Aorta (tissue), 5 donors: ENCODE measurements at regions of chr2 and their contacts with region 1.

Region 1: GRCh38 chr2:163735685-163736432 is at the start of gene FIGN:
- DNase-seq: peak; percentile 83 to 93
- ATAC-seq: peak; percentile 89
- H3K4me3 ChIP-seq: peak within 1 kb of the TSS; percentile 96 to 100
- H3K27ac ChIP-seq: peak within 1 kb of the TSS; percentile 74 to 92
- H3K4me1 ChIP-seq: no peaks in the 10 kb centered on the region
- H3K27me3 ChIP-seq: no peaks in the 10 kb centered on the region
- total RNA-seq, gene FIGN: 12.7 to 27.8 TPM

Region 2: DNA sequence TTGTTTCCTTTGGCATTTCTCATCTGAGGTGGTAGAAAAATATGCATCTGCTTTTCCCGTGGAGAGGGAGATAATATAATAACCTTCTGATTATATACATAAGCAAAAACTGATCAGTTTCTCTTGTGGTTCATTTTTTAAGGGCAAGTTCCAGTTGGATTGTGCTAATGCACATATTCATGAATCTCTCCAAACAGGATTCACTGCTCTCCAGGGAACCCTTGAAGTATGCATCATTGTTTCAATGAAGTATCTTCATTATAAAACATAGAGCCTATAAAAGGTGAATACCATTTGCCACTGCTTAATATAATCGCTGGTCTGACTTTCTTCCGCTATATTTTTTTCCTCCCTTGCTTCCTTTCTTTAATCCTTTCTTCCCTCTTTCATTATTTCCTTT is 384.7 kb before region 1 on chr2:
- intact Hi-C with region 1: loop called (anchors 5 to 10 kb)
- DNase-seq: no peak
- ATAC-seq: no peak
- H3K4me3 ChIP-seq: no peak overlapping the region
- H3K27ac ChIP-seq: no peak overlapping the region
- H3K4me1 ChIP-seq: peaks cover 2 to 4% of the 10 kb centered on the region in 2 donors
- H3K27me3 ChIP-seq: no peaks in the 10 kb centered on the region

Region 3: DNA sequence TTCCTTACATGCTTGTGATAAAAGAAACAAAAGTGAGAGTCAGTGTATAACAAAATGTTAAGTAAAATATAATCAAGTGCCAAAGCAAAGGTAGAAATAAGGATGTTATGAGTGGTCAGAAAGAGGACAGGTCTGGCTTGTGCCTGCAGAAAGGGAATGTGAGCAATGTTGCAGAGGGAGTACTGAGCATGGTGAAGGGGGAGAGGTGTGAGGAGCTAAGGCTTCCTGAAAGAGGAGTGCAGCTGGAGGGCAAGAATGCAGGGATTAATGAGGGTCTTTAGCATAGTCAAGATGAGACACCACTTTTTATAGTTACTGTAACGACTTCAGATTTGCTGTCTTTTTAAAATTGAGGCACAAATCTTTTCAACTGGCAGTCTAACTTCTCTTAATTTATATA is 21.9 kb after region 1 on chr2:
- intact Hi-C with region 1: no loop called
- DNase-seq: no peak
- ATAC-seq: no peak
- H3K4me3 ChIP-seq: no peak overlapping the region
- H3K27ac ChIP-seq: no peak overlapping the region
- H3K4me1 ChIP-seq: peaks cover 0 to 2% of the 10 kb centered on the region in 2 donors
- H3K27me3 ChIP-seq: no peaks in the 10 kb centered on the region

Region 4: DNA sequence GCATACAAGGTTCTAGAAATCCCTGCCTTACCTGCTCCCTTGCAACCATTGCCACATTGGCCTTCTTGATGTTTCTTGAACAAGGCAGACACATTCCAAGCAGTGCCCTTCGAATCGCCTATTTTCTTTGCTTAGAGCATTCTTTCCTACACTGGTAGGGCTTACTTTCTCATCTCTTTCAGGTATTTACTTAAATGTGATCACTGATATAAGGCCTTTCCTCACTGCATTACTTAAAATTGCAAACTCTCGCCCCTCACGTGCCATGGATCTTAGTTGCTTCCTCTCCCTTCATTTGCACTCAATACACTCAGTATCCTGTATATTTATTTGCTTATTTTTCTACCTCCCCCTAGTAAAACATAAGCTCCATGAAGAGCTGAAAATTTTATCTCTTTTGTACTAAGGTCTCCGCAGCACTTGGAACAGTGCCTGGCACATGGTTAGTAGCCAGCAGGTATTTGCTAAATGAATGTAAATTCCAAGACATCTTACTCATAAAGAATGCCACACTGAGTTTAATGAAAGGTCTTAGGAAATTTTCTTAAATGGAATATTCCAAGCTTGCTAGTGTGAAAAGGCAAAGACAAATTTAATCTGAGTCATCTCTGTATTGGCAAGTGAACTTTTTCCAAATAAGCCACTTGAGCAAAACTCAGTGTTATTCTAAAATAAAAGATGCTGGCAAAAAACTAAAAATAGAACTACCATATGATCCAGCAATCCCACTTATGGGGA is 42.4 kb after region 1 on chr2:
- intact Hi-C with region 1: loop called in 1 of 2 experiments (anchors 5 kb)
- DNase-seq: peak; percentile 64 to 75
- ATAC-seq: no peak
- H3K4me3 ChIP-seq: no peak overlapping the region
- H3K27ac ChIP-seq: peak overlapping the region in 1 of 2 donors; percentile 17
- H3K4me1 ChIP-seq: no peaks in the 10 kb centered on the region
- H3K27me3 ChIP-seq: no peaks in the 10 kb centered on the region

Region 5: GRCh38 chr2:163859951-163860350 is 124.1 kb after region 1 on chr2:
- intact Hi-C with region 1: no loop called
- DNase-seq: no peak
- ATAC-seq: no peak
- H3K4me3 ChIP-seq: no peak overlapping the region
- H3K27ac ChIP-seq: no peak overlapping the region
- H3K4me1 ChIP-seq: no peaks in the 10 kb centered on the region
- H3K27me3 ChIP-seq: no peaks in the 10 kb centered on the region

Region 6: DNA sequence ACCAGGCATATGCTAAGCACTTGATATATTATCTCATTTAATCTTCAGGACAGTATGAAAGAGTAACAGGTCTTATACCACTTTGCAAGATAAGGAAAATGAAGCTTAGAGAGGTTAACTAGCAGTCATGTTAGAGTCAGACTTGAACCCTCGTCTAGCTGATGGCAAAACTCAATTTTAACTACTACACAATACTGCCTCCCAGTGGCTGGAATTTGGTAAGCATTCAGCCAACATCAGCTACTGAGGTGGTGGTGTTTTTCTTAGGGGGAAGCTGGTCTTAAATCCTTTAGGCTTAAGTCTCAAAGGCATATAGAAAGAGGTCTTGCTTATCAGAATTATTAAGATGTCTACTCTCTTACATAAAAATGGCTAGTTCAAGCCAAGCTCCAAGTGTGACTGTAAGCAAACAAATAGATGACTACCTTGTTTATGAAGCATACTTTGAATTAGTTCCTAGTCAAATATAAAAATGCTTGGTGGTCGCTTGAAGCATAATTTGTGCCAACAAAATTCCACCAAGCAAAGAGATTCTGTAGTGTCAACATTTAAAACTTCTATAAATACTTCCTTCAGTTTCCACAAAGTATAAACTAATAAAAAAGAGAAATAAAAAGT is 325.4 kb after region 1 on chr2:
- intact Hi-C with region 1: loop called in 1 of 2 experiments (anchors 5 kb)
- DNase-seq: no peak
- ATAC-seq: peak; percentile 64
- H3K4me3 ChIP-seq: no peak overlapping the region
- H3K27ac ChIP-seq: no peak overlapping the region
- H3K4me1 ChIP-seq: peaks cover 0 to 2% of the 10 kb centered on the region in 2 donors
- H3K27me3 ChIP-seq: no peaks in the 10 kb centered on the region

Region 7: DNA sequence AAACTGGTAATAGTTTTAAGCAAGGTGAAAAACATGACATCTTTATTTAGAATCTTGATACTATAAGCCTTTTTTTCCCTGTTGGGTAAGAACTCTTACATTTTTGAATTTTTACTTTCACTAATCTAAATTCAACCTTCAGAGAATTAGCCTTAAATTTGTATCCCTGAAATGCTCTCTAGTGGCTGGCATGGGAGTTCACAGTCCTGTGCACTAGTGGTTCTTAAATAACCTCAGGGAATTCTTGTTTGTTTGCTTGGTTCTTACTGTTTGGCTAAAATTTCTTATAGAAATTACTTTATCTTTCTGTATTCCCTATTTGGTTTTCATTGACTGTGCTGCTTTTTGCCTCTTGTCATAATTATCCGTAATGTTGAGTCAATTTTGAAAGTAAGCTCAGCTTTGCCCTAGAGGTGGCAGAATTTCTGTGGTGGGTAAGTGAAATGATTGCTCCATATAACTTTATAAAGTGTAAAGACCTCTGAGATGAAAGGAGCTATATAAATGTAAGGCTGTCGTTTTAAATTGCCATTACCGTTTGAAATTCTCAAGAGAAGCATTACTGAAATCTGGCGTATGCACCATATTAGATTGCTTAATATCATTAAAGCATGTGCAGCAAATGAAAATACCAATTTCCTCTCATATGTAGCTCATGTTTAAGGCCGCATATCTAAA is 391.2 kb after region 1 on chr2:
- intact Hi-C with region 1: loop called in 1 of 2 experiments (anchors 10 kb)
- DNase-seq: no peak
- ATAC-seq: peak; percentile 44
- H3K4me3 ChIP-seq: no peak overlapping the region
- H3K27ac ChIP-seq: no peak overlapping the region
- H3K4me1 ChIP-seq: peaks cover 0 to 6% of the 10 kb centered on the region in 2 donors
- H3K27me3 ChIP-seq: no peaks in the 10 kb centered on the region

Region 8: GRCh38 chr2:164523726-164524125 is 787.9 kb after region 1 on chr2:
- intact Hi-C with region 1: no loop called
- DNase-seq: no peak
- ATAC-seq: no peak
- H3K4me3 ChIP-seq: no peak overlapping the region
- H3K27ac ChIP-seq: no peak overlapping the region
- H3K4me1 ChIP-seq: no peaks in the 10 kb centered on the region
- H3K27me3 ChIP-seq: no peaks in the 10 kb centered on the region